CD4-positive, alpha-beta T cell (primary cell): ENCODE measurements at regions of chr14 and their contacts with region 1.

Region 1: GRCh38 chr14:95515596-95516552 is 576 bp downstream of the SYNE3 start:
- DNase-seq: peak; percentile 64 to 94 (median 76)
- ATAC-seq: peak; percentile 85
- H3K4me3 ChIP-seq: peak overlapping the region; percentile 74
- H3K4me3 Mint-ChIP-seq: peak overlapping the region; percentile 87
- H3K27ac ChIP-seq: peak overlapping the region; percentile 64 to 80
- H3K27ac Mint-ChIP-seq: peak overlapping the region; percentile 84
- H3K4me1 ChIP-seq: peaks cover 72% of the 10 kb centered on the region
- H3K4me1 Mint-ChIP-seq: peaks cover 78% of the 10 kb centered on the region
- H3K27me3 ChIP-seq: no peaks in the 10 kb centered on the region
- H3K27me3 Mint-ChIP-seq: no peaks in the 10 kb centered on the region
- CTCF ChIP-seq: peak; percentile 64

Region 2: GRCh38 chr14:95442633-95443021 is 73.2 kb before region 1 on chr14:
- CTCF ChIA-PET with region 1: interaction called, 18 read pairs
- POLR2A ChIA-PET with region 1: interaction called, 12 read pairs
- intact Hi-C with region 1: loop called in 1 of 2 experiments (anchors 2 kb)
- DNase-seq: peak; percentile 65 to 86 (median 72)
- ATAC-seq: peak; percentile 96
- H3K4me3 ChIP-seq: no peak overlapping the region
- H3K4me3 Mint-ChIP-seq: no peak overlapping the region
- H3K27ac ChIP-seq: peak overlapping the region in 1 of 2 donors; percentile 8
- H3K27ac Mint-ChIP-seq: peak overlapping the region; percentile 73
- H3K4me1 ChIP-seq: peaks cover 8% of the 10 kb centered on the region
- H3K4me1 Mint-ChIP-seq: peaks cover 23% of the 10 kb centered on the region
- H3K27me3 ChIP-seq: no peaks in the 10 kb centered on the region
- H3K27me3 Mint-ChIP-seq: no peaks in the 10 kb centered on the region
- CTCF ChIP-seq: peak; percentile 85

Region 3: GRCh38 chr14:95483309-95484165 is 32.3 kb before region 1 on chr14:
- CTCF ChIA-PET with region 1: interaction called, 5 read pairs
- POLR2A ChIA-PET with region 1: interaction called, 4 read pairs
- intact Hi-C with region 1: loop called in 1 of 2 experiments (anchors 5 kb)
- DNase-seq: no peak
- ATAC-seq: no peak
- H3K4me3 ChIP-seq: no peak overlapping the region
- H3K4me3 Mint-ChIP-seq: no peak overlapping the region
- H3K27ac ChIP-seq: peak overlapping the region in 1 of 2 donors; percentile 21
- H3K27ac Mint-ChIP-seq: peak overlapping the region; percentile 66
- H3K4me1 ChIP-seq: peaks cover 52% of the 10 kb centered on the region
- H3K4me1 Mint-ChIP-seq: peaks cover 68% of the 10 kb centered on the region
- H3K27me3 ChIP-seq: no peaks in the 10 kb centered on the region
- H3K27me3 Mint-ChIP-seq: no peaks in the 10 kb centered on the region
- CTCF ChIP-seq: no peak

Region 4: GRCh38 chr14:95527387-95528002 is 11.6 kb after region 1 on chr14:
- CTCF ChIA-PET with region 1: interaction called, 20 read pairs
- POLR2A ChIA-PET with region 1: interaction called, 18 read pairs
- intact Hi-C with region 1: loop called in 1 of 2 experiments (anchors 1 kb)
- DNase-seq: peak in 9 of 14 experiments; percentile 36 to 72 (median 48)
- ATAC-seq: no peak
- H3K4me3 ChIP-seq: no peak overlapping the region
- H3K4me3 Mint-ChIP-seq: no peak overlapping the region
- H3K27ac ChIP-seq: no peak overlapping the region
- H3K27ac Mint-ChIP-seq: peak overlapping the region; percentile 31
- H3K4me1 ChIP-seq: peaks cover 41% of the 10 kb centered on the region
- H3K4me1 Mint-ChIP-seq: peaks cover 63% of the 10 kb centered on the region
- H3K27me3 ChIP-seq: no peaks in the 10 kb centered on the region
- H3K27me3 Mint-ChIP-seq: no peaks in the 10 kb centered on the region
- CTCF ChIP-seq: peak; percentile 93

Region 5: DNA sequence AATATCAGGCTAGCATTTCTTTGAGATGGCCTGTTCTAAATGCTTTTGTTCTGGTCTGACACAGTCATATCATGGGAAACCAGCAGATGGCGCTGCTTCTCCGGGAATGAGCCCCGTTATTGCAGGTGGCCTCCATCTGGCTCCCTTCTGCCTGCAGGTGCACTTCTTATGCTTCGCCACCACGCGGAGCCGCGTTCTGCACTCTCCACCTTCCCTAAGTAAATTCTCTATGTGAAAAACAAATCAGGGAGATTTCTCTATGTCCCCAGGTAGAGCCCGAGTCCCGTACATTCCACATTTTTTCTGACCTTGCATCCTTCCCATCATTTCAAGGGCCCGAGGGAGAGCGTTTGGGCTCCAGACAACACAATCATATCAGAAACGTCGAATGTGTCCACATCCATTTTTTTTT is 45.1 kb after region 1 on chr14:
- CTCF ChIA-PET with region 1: no interaction called
- POLR2A ChIA-PET with region 1: no interaction called
- intact Hi-C with region 1: no loop called
- DNase-seq: peak; percentile 73 to 90 (median 80)
- ATAC-seq: peak; percentile 99
- H3K4me3 ChIP-seq: no peak overlapping the region
- H3K4me3 Mint-ChIP-seq: no peak overlapping the region
- H3K27ac ChIP-seq: no peak overlapping the region
- H3K27ac Mint-ChIP-seq: no peak overlapping the region
- H3K4me1 ChIP-seq: peaks cover 4% of the 10 kb centered on the region
- H3K4me1 Mint-ChIP-seq: peaks cover 5% of the 10 kb centered on the region
- H3K27me3 ChIP-seq: peaks cover 0 to 4% of the 10 kb centered on the region in 2 experiments
- H3K27me3 Mint-ChIP-seq: peaks cover 14% of the 10 kb centered on the region
- CTCF ChIP-seq: peak; percentile 99

Region 6: DNA sequence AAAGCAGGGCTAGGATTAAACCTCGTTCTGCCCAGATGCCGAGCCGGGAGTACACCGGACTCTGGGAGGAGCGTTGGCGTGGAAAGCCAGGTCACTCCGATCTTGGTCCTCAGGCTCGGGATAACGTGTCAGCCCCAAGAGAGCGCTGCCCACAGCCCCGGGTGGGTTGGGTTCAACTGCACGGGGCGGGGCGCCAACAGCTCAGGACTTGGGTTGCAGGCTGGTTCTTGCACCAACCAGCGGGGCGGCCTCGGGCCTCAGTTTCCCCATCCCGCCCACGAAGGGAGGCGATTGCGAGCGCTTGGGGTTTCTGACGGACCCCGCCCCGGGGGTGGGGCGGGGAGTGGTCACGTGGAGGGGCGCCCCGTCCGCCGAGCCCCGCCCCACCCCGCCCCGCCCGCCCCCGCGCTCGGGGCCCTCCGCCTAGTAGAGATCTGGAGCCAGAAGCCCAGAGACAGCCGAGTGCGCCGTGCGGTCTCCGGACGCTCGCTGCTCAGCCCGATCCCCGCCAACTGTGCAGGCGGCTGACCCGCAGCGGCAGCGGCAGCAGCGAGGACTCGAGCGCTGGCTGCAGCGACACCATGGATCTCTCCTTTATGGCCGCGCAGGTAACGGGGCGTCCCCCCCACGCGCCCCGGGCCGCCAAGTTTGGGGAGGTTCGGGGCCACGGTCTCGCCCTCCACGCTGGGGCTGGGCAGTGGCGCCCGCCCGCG is 523.2 kb after region 1 on chr14 and contains the start of gene C14orf132:
- CTCF ChIA-PET with region 1: no interaction called
- POLR2A ChIA-PET with region 1: no interaction called
- intact Hi-C with region 1: loop called in 1 of 2 experiments (anchors 5 kb)
- DNase-seq: peak; percentile 20 to 70 (median 47)
- ATAC-seq: peak; percentile 81
- H3K4me3 ChIP-seq: peak within 1 kb of the TSS; percentile 57
- H3K4me3 Mint-ChIP-seq: peak within 1 kb of the TSS; percentile 90
- H3K27ac ChIP-seq: no peak within 1 kb of the TSS
- H3K27ac Mint-ChIP-seq: no peak within 1 kb of the TSS
- H3K4me1 ChIP-seq: peaks cover 15% of the 10 kb centered on the region
- H3K4me1 Mint-ChIP-seq: peaks cover 49% of the 10 kb centered on the region
- H3K27me3 ChIP-seq: peaks cover 29% of the 10 kb centered on the region in 2 experiments
- H3K27me3 Mint-ChIP-seq: peaks cover 50% of the 10 kb centered on the region
- CTCF ChIP-seq: no peak
- total RNA-seq, gene C14orf132: 2.0 to 2.4 TPM